Activated naive CD4-positive, alpha-beta T cell treated with anti-CD3 and anti-CD28 coated beads for 36 hours (primary cell): ENCODE measurements at regions of chr12 and their contacts with region 1.

Region 1: DNA sequence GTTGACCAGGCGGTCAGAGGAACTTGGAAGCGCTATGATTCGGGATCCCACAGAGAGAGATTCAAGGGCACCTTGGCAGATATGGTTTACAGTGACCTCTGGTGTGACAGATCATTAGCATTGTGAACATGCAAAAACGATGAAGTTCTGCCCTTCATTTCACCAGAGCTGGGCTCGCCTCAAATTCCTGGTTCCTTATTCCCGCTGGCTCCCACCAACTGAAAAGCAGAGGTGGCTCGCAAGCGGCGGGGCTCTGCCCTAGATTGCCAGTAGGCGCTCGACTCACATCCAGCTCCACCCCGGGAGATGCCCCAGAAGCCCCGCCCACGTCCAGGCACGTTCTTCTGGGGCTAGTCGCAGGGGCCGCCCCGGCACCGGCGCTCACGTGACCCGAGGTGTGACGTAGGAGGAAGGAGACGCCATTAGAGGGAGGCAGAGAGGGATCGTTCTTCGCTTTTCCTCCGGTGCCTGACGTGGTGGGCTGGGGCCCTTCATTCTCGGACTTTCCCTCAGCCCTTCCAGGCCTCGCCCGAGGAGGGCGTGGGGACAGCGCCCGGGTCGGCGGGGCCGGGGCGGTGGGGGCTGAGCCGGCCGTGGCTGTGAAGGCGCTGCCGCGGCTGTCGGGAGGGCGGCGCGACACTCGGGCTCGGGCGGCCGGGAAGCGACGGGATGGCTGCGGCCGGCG is at the start of gene RAB21:
- DNase-seq: peak; percentile 99
- H3K4me3 Mint-ChIP-seq: peak within 1 kb of the TSS; percentile 89
- H3K27ac Mint-ChIP-seq: peak within 1 kb of the TSS; percentile 96
- H3K4me1 Mint-ChIP-seq: peaks cover 35% of the 10 kb centered on the region
- H3K27me3 Mint-ChIP-seq: peaks cover 7% of the 10 kb centered on the region
- total RNA-seq, gene RAB21: 76.3 to 80.3 TPM

Region 2: DNA sequence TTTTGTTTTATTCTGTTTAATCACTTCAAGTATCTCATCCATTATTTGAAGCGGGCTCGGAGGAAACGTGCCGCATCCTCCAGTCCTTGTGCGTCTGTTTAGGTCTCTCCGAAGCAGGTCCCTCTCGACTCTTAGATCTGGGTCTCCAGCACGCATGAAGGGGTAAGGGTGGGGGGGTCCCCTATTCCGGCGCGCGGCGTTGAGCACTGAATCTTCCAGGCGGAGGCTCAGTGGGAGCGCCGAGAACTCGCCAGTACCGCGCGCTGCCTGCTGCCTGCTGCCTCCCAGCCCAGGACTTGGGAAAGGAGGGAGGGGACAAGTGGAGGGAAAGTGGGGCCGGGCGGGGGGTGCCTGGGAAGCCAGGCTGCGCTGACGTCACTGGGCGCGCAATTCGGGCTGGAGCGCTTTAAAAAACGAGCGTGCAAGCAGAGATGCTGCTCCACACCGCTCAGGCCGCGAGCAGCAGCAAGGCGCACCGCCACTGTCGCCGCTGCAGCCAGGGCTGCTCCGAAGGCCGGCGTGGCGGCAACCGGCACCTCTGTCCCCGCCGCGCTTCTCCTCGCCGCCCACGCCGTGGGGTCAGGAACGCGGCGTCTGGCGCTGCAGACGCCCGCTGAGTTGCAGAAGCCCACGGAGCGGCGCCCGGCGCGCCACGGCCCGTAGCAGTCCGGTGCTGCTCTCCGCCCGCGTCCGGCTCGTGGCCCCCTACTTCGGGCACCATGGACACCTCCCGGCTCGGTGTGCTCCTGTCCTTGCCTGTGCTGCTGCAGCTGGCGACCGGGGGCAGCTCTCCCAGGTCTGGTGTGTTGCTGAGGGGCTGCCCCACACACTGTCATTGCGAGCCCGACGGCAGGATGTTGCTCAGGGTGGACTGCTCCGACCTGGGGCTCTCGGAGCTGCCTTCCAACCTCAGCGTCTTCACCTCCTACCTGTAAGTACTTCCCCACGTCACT is 315.0 kb before region 1 on chr12 and contains the start of gene LGR5:
- CTCF ChIA-PET with region 1: no interaction called
- intact Hi-C with region 1: loop called (anchors 5 kb)
- DNase-seq: peak; percentile 58
- H3K4me3 Mint-ChIP-seq: peak within 1 kb of the TSS; percentile 74
- H3K27ac Mint-ChIP-seq: no peak within 1 kb of the TSS
- H3K4me1 Mint-ChIP-seq: peaks cover 18% of the 10 kb centered on the region
- H3K27me3 Mint-ChIP-seq: peaks cover 55% of the 10 kb centered on the region
- total RNA-seq, gene LGR5: not detected

Region 3: GRCh38 chr12:71838676-71839075 is 84.1 kb after region 1 on chr12:
- CTCF ChIA-PET with region 1: interaction called, 5 read pairs
- intact Hi-C with region 1: loop called (anchors 1 kb)
- DNase-seq: no peak
- H3K4me3 Mint-ChIP-seq: peak overlapping the region; percentile 94
- H3K27ac Mint-ChIP-seq: peak overlapping the region; percentile 98
- H3K4me1 Mint-ChIP-seq: peaks cover 54% of the 10 kb centered on the region
- H3K27me3 Mint-ChIP-seq: no peaks in the 10 kb centered on the region